Heart right ventricle (tissue), 16 donors: ENCODE measurements at regions of chr18 and their contacts with region 1.

Region 1: GRCh38 chr18:67290421-67290820 is 226.1 kb downstream of the DSEL start:
- DNase-seq: no peak
- ATAC-seq: no peak
- H3K4me3 ChIP-seq: no peak overlapping the region
- H3K27ac ChIP-seq: no peak overlapping the region
- H3K4me1 ChIP-seq: no peaks in the 10 kb centered on the region
- H3K27me3 ChIP-seq: no peaks in the 10 kb centered on the region
- CTCF ChIP-seq: no peak

Region 2: DNA sequence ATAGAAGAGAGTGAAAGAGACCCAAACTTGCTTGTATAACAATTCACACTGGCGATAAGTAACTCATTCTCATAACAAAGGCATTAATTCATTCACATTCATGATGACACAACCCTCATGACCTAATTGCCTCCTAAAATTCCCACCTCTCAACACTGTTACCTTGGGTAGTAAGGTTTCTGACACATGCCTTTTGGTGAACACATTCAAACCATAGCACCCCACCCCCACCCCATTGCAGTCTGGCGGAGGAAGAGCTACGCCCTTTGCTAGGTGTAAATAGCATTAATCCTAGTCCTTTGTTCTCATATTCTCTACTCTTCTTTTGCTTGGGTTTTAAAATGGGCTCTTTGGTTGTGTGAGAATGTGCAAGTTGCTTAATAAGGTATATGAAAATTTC is 135.4 kb before region 1 on chr18:
- intact Hi-C with region 1: no loop called
- DNase-seq: no peak
- ATAC-seq: no peak
- H3K4me3 ChIP-seq: no peak overlapping the region
- H3K27ac ChIP-seq: no peak overlapping the region
- H3K4me1 ChIP-seq: peaks cover 0 to 4% (median 0%) of the 10 kb centered on the region in 9 donors
- H3K27me3 ChIP-seq: no peaks in the 10 kb centered on the region
- CTCF ChIP-seq: no peak

Region 3: GRCh38 chr18:67302043-67302442 is 11.6 kb after region 1 on chr18:
- intact Hi-C with region 1: loop called in 1 of 10 experiments (anchors 1 kb)
- DNase-seq: no peak
- ATAC-seq: no peak
- H3K4me3 ChIP-seq: no peak overlapping the region
- H3K27ac ChIP-seq: no peak overlapping the region
- H3K4me1 ChIP-seq: no peaks in the 10 kb centered on the region
- H3K27me3 ChIP-seq: no peaks in the 10 kb centered on the region
- CTCF ChIP-seq: no peak